Natural killer cell (primary cell): ENCODE measurements at regions of chr6 and their contacts with region 1.

Region 1: DNA sequence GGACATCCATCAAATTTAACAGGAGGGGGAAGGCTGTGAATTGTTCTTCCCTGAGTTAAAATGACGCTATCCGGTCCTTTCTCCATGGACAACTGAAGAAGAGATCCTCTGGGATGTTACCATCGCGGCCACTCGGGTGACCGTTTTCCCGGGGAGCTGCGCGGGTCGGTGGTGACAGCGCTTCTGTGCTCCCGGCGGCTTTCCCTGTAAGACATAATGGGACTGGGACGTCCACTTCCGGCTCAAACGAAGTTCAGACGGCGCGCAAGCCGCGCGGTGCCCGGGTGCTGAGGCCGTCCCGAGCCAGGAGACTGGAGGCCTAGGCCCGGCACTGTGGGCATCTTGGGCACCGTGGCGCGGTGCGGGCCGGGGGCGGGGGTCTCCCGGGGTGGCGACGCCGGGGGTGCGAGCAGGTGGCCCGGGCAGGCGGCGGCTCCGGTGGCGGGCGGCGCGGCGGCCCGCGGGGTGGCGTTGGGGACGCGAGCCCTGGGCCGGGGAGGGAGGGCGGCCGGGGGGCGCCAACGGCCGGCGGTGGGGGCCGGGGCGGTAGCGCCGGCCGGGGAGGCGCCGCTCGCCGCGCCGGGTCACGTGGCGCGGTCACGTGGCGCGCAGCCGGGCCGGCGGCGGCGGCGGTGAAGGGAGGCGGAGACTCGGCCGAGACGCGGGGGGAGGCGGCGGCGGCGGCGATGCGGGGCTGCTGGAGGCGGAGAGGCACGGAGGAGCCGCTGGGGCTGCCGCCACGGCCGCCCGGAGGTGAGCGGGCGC is 63.6 kb downstream of the GTF2H5 start:
- DNase-seq: peak; percentile 74 to 84
- ATAC-seq: peak; percentile 76 to 88 (median 86)
- H3K4me3 ChIP-seq: peak overlapping the region; percentile 58
- H3K4me3 Mint-ChIP-seq: peak overlapping the region; percentile 90
- H3K27ac ChIP-seq: peak overlapping the region; percentile 70
- H3K27ac Mint-ChIP-seq: peak overlapping the region; percentile 85 to 87
- H3K4me1 ChIP-seq: peaks cover 13% of the 10 kb centered on the region
- H3K4me1 Mint-ChIP-seq: peaks cover 23 to 30% of the 10 kb centered on the region in 2 donors
- H3K27me3 ChIP-seq: no peaks in the 10 kb centered on the region
- H3K27me3 Mint-ChIP-seq: no peaks in the 10 kb centered on the region
- CTCF ChIP-seq: no peak

Region 2: DNA sequence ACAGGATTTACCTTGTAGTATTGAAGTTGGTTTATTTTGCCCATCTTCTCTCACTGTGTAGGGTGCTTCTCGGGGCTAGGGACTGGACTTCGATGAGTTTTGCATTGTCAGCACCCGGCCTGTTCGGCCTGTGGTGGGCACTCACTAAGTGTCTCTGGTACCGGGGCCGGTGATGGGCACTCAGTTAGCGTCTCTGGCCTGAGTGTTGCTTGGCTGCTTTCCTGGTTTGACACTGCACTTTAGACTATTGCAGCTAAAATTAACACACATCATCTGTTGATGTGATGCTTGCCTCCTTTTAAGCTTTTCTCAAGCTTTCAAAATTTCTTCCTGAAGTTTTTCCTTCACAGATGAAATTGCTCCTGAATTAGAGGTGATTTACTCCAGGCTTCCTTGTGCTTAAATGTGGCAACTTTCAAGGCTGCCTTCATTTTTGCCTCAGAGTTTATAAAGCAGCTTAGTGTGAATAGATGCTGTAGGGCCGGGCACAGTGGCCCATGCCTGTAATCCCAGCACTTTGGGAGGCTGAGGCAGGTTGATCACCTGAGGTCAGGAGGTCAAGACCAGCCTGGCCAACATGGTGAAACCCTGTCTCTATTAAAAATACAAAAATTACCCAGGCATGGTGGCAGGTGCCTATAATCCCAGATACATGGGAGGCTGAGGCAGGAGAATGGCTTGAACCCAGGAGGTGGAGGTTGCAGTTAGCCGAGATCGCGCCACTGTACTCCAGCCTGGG is 38.8 kb after region 1 on chr6:
- intact Hi-C with region 1: loop called (anchors 5 kb)
- DNase-seq: no peak
- ATAC-seq: no peak
- H3K4me3 ChIP-seq: no peak overlapping the region
- H3K4me3 Mint-ChIP-seq: no peak overlapping the region
- H3K27ac ChIP-seq: peak overlapping the region; percentile 72
- H3K27ac Mint-ChIP-seq: peak overlapping the region; percentile 52 to 78
- H3K4me1 ChIP-seq: peaks cover 16% of the 10 kb centered on the region
- H3K4me1 Mint-ChIP-seq: peaks cover 9 to 30% of the 10 kb centered on the region in 2 donors
- H3K27me3 ChIP-seq: no peaks in the 10 kb centered on the region
- H3K27me3 Mint-ChIP-seq: no peaks in the 10 kb centered on the region
- CTCF ChIP-seq: no peak

Region 3: DNA sequence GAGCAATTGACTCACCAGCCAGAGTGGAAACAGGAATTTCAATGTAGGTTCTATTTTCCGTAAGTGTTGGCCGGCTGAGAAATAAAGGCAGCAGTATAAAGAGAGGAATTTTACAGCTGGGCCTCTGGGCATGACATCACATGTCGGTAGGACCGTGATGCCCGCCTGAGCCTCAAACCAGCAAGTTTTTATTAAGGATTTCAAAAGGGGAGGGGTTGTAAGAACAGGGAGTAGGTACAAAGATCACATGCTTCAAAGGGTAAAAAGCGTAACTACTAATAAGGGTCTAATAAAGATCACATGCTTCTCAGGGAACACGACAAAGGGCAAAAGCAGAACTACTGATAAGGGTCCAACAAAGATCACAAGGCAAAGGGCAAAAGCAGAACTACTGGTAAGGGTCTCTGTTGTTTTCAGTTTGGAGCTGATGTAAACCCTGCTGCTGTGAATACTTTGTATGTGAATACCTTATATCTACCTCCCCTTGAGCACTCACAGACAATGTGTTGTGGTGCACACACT is 71.5 kb after region 1 on chr6:
- intact Hi-C with region 1: no loop called
- DNase-seq: no peak
- ATAC-seq: no peak
- H3K4me3 ChIP-seq: no peak overlapping the region
- H3K4me3 Mint-ChIP-seq: no peak overlapping the region
- H3K27ac ChIP-seq: no peak overlapping the region
- H3K27ac Mint-ChIP-seq: no peak overlapping the region
- H3K4me1 ChIP-seq: no peaks in the 10 kb centered on the region
- H3K4me1 Mint-ChIP-seq: no peaks in the 10 kb centered on the region
- H3K27me3 ChIP-seq: no peaks in the 10 kb centered on the region
- H3K27me3 Mint-ChIP-seq: no peaks in the 10 kb centered on the region
- CTCF ChIP-seq: no peak

Region 4: DNA sequence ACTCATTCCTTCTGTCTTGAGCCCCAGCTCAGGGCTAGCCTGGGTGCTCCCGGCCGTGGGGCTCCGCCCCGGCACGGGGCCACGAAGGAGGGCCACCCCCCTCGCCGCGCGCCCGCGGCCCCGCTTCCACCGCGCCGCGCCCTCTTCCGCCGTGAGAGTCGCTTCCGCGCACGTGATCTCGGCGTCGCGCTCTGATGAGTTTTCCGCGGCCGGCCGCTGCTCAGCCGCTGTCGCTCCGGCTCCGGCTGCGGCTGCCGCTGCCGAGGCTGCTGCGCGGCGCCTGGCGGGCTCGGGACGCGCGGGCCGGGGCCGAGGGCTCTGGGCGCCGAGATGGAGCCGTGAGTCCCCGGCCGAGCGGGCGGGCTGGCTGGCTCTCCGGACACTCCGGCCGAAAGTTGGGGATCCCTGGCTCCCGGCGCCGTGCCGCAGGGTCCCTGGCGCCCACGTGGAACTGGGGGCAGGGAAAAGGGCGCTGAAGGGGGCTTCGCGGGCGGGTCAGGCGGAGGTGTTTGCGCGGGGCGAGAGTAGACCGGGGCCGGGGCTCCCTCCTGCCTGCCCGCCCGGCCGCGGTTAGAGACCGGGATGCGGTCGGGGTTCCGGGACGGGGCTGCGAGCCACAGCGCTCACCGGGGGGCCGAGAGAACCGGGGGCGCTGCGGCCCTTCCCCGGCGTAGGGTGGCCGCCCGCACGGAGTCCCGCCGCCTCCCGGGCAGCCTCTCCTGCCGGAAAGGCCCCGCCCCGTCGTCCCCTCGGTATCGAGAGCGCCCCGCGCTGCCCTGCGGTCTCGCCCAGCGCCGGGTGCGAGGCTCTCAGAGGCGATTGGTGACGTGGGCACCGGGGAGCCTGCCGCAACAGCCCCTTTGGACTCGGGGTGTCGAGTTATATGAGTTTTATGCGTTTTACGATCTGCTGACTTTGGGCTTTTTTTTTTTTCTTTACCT is 328.4 kb after region 1 on chr6 and contains the start of gene TMEM181:
- intact Hi-C with region 1: loop called (anchors 1 kb)
- DNase-seq: peak; percentile 86 to 96
- ATAC-seq: peak; percentile 81 to 91 (median 87)
- H3K4me3 ChIP-seq: peak within 1 kb of the TSS; percentile 76
- H3K4me3 Mint-ChIP-seq: peak within 1 kb of the TSS; percentile 98
- H3K27ac ChIP-seq: peak within 1 kb of the TSS; percentile 92
- H3K27ac Mint-ChIP-seq: peak within 1 kb of the TSS; percentile 88 to 96
- H3K4me1 ChIP-seq: peaks cover 52% of the 10 kb centered on the region
- H3K4me1 Mint-ChIP-seq: peaks cover 42 to 45% of the 10 kb centered on the region in 2 donors
- H3K27me3 ChIP-seq: no peaks in the 10 kb centered on the region
- H3K27me3 Mint-ChIP-seq: no peaks in the 10 kb centered on the region
- CTCF ChIP-seq: no peak
- total RNA-seq, gene TMEM181: 44.8 to 60.9 (median 45.0) TPM